GM12878 (cell line): ENCODE measurements at regions of chr2 and their contacts with region 1.

Region 1: GRCh38 chr2:182586432-182586831 is 129.6 kb upstream of the DNAJC10 start:
- DNase-seq: no peak
- ATAC-seq: peak; percentile 86
- H3K4me3 ChIP-seq: no peak overlapping the region
- H3K27ac ChIP-seq: no peak overlapping the region
- H3K4me1 ChIP-seq: no peaks in the 10 kb centered on the region
- H3K27me3 ChIP-seq: no peaks in the 10 kb centered on the region
- CTCF ChIP-seq: peak; percentile 18 to 40 (median 30); a peak in 3 of 6 replicates
- EP300 ChIP-seq: no peak
- POLR2A ChIP-seq: no peak
- RAD21 ChIP-seq: peak; percentile 30; the same call in 1 of the 2 replicates

Region 2: GRCh38 chr2:182186132-182186735 is 400.2 kb before region 1 on chr2:
- CTCF ChIA-PET with region 1: interaction called, 4 read pairs
- POLR2A ChIA-PET with region 1: no interaction called
- RAD21 ChIA-PET with region 1: interaction called, 4 read pairs
- SMC1A ChIA-PET with region 1: interaction called, 3 read pairs
- in situ Hi-C with region 1: no loop called
- intact Hi-C with region 1: loop called (anchors 5 kb)
- DNase-seq: no peak
- ATAC-seq: peak; percentile 75
- H3K4me3 ChIP-seq: no peak overlapping the region
- H3K27ac ChIP-seq: no peak overlapping the region
- H3K4me1 ChIP-seq: no peaks in the 10 kb centered on the region
- H3K27me3 ChIP-seq: no peaks in the 10 kb centered on the region
- CTCF ChIP-seq: peak; percentile 19 to 70 (median 51); a peak in 5 of 6 replicates
- EP300 ChIP-seq: no peak
- POLR2A ChIP-seq: no peak
- RAD21 ChIP-seq: peak; percentile 79

Region 3: DNA sequence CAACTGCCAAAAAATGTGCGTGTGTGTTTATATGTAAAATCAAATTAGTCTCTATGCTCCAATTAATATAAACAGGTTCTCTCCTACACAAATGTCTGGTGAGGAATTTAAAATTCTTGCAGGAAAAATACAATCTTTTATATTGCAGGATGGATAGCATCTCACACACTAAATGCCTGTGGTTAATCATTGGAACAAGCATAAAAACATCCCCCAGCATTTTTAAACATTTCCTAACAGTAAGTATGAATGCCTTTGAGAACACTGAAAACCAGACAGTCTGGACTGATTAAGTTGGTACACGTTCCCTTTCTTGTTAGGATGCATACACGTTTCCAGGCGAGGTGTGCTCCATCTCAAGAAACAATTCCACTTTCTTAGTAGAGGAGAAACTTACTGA is 129.6 kb before region 1 on chr2:
- CTCF ChIA-PET with region 1: no interaction called
- POLR2A ChIA-PET with region 1: no interaction called
- RAD21 ChIA-PET with region 1: no interaction called
- SMC1A ChIA-PET with region 1: no interaction called
- in situ Hi-C with region 1: no loop called
- intact Hi-C with region 1: no loop called
- DNase-seq: no peak
- ATAC-seq: no peak
- H3K4me3 ChIP-seq: no peak overlapping the region
- H3K27ac ChIP-seq: no peak overlapping the region
- H3K4me1 ChIP-seq: no peaks in the 10 kb centered on the region
- H3K27me3 ChIP-seq: no peaks in the 10 kb centered on the region
- CTCF ChIP-seq: no peak
- EP300 ChIP-seq: no peak
- POLR2A ChIP-seq: no peak
- RAD21 ChIP-seq: no peak